ENCODE measurements at regions of chr9 and their contacts with region 1.

Region 1: GRCh38 chr9:97982683-97983588 is at the start of gene ANP32B:
- DNase-seq: peak; percentile 94
- H3K27ac ChIP-seq: peak within 1 kb of the TSS; percentile 96
- CTCF ChIP-seq: peak; percentile 100

Region 2: DNA sequence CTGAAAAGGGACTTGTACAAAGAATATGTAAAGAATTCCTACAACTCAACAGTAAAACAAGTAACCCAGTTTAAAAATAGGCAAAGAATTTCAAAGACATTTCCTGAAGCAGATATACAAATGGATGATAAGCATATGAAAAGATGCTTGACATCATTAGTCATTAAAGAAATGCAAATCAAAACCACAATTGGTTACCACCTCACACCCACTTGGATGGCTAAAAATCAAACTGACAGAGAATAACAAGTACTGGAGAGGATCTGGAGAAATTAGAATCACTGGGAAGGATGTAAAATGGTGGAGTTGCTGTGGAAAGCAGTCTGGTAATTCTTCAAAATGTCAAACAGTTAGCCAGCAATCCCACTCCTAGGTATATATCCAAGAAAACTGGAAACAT is 142.4 kb before region 1 on chr9:
- CTCF ChIA-PET with region 1: no interaction called
- POLR2A ChIA-PET with region 1: no interaction called
- DNase-seq: no peak
- H3K27ac ChIP-seq: no peak overlapping the region
- CTCF ChIP-seq: no peak

Region 3: DNA sequence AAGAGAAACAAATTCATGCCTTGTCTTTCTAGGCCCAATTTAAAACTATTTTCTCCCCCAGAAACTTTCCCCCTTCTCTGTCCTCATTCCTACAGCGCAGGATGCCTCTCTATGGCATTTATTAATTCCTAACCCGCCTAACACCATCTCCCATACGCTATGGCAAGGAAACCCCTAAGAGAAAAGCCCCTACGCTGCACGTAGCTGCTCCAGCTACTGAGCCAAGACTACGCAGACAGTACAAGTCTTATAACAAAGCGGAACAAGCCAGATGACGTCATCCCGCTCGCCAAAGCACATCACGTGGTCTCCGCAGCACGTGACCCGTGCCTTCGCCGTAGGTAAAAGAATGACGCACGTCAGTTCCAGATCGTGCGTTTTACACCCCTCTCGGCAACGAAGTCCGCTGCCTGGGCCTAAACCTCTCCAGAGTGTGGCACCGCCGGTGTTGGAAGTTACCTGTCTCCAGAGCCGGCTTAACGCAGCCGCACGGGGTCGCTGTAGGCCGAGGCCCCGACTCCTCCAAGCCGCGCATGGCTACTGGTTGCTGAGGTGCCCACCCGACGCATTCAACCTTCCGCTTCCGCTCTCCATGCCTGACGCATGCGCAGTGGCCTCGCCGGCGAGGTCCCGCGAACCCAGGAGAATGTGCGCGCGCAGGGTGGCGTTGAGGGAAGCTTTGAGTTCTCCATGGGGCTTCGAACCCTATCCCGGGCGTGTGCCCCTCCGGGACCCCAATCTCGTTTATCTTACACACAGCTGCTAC is 60.8 kb before region 1 on chr9 and contains the start of gene TRMO:
- CTCF ChIA-PET with region 1: interaction called, 18 read pairs
- POLR2A ChIA-PET with region 1: interaction called, 4 read pairs
- DNase-seq: peak; percentile 99
- H3K27ac ChIP-seq: peak within 1 kb of the TSS; percentile 97
- CTCF ChIP-seq: peak; percentile 97